ENCODE measurements at regions of chr4 and their contacts with region 1.

Region 1: DNA sequence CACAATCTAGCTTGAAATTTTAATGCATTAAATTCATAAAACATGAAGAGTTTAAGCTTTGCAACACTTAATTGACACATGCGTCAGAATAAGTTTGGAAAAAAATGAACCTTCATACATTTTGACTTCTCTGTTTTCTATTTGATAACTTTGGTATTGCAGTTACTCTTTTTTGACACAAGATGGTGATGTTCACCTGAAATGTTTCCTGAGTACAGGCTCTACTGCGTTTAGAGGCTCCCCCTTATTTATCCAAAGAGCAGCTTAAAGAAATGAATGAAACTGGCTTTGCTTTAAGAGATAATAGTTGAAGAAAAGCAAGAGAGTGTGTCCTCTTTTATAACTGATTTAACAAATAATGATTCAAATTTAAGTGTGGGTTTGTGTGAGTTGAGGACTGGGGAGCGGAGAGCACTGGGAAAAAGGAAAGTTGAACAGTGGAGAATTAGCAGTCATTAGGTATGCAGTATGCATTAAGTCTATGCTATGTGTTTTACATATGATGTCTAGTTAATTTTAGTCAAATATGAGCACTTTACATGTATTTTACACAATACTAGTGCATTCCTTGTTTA is 180.6 kb upstream of the NUDT6 start:
- DNase-seq: no peak
- ATAC-seq: peak; percentile 50 to 69

Region 2: GRCh38 chr4:122845760-122846159 is 257.2 kb before region 1 on chr4:
- intact Hi-C with region 1: no loop called
- DNase-seq: no peak
- ATAC-seq: no peak

Region 3: DNA sequence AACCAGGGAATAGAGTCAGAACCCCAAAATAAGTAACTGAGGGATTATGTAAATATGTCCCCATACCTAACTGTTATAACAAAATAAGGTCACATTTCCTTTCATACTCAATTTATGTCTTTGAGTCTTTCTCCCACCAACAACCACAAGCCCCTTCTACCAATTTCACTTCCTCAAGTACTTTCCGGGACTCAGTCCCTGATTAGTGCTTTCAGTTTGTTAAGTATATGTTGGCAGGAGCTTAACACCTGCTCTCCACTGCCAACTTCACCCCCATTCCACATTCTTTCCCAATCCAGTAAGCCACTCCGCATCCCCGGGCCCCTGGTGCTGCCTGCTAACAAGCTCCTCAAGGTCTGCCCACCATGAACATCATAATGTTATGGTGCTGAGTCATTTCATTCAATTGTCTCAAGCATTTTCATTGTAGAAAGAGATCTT is 222.3 kb after region 1 on chr4:
- intact Hi-C with region 1: no loop called
- DNase-seq: no peak
- ATAC-seq: no peak

Region 4: GRCh38 chr4:123661080-123661737 is 558.2 kb after region 1 on chr4:
- intact Hi-C with region 1: loop called in 1 of 2 experiments (anchors 5 kb)
- DNase-seq: no peak
- ATAC-seq: no peak

Region 5: GRCh38 chr4:124262211-124263179 is 1159.5 kb after region 1 on chr4:
- intact Hi-C with region 1: loop called (anchors 2 to 10 kb)
- DNase-seq: peak; percentile 43
- ATAC-seq: peak; percentile 87 to 92

Region 6: DNA sequence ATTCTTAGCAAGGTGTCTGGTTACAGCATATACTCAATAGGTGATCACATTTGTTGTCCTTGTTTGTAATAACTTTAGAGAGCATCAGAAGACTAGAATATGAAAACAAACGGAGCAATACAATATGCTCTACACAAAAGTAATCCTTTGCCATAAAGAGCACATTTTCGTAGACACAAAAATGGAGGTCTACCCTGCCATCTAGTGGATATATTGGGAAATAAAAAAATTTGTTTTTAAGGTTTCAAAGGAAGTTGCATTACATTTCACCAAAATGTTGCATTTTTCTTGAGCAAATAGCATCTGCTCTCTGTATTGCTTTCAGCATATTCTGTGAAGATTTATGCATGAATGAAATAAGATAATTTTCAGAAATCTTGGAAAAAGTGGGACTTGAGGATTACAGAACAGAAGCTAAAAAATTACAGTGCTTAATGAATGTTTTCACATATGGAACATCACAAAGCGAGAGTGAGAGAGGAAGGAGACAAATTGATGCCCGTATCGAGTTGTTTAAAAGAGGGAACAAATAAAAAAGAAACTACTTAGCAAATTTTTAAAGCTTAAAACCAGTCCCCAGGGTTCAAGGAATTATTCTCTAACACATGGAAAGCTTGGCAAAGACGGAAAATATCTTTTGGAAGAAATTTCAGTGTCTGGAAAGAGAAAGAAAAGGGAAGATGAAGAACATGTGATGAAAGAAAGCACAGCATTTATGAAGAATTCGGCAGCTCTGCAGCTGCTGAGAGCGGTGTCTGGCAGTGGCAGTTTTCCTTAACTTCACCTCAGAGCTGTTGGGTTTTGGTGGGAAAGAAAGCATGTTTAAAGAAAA is 1219.5 kb after region 1 on chr4:
- intact Hi-C with region 1: loop called in 1 of 2 experiments (anchors 10 kb)
- DNase-seq: no peak
- ATAC-seq: peak in 1 of 2 donors; percentile 38